Left cardiac atrium (tissue), 4 donors: ENCODE measurements at regions of chr17 and their contacts with region 1.

Region 1: DNA sequence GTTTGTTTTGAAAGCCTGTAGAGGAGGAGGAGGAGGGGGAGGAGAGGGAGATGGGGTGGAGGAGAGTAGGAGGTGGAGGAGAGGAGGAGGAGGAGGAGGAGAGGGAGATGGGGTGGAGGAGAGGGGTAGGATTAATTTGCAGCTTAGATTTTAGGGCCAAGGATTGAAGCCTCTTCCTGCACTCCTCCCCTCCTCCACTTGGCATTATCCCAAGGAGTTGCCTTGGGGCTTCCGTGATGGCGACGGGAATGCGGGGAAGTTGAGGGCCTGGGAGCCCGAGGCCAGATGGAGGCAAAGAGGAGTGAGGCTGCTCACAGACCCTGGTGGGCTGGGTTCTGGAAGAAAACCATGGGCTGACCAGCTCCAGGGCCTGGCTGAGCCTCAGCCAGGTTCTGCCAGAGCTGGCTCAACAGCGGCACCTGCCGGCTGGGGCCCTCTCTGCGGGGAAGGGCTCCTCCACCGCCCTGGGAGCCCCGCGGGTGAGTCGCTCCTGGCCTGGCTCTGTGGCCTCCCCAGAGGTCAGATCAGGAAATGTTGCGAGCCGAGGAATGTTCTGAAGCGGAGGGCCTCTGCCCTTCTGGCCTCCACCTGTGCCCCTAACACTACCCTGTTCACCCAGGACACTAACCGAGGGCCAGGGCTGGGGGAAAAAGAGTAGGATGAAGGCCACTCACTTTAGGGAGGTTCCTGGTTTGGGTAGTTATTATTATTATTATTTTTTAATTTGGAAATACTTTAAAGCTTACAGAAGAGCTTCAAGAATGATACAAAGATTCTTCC is 23.9 kb upstream of the FMNL1 start:
- DNase-seq: peak; percentile 94
- ATAC-seq: peak; percentile 97 to 99

Region 2: DNA sequence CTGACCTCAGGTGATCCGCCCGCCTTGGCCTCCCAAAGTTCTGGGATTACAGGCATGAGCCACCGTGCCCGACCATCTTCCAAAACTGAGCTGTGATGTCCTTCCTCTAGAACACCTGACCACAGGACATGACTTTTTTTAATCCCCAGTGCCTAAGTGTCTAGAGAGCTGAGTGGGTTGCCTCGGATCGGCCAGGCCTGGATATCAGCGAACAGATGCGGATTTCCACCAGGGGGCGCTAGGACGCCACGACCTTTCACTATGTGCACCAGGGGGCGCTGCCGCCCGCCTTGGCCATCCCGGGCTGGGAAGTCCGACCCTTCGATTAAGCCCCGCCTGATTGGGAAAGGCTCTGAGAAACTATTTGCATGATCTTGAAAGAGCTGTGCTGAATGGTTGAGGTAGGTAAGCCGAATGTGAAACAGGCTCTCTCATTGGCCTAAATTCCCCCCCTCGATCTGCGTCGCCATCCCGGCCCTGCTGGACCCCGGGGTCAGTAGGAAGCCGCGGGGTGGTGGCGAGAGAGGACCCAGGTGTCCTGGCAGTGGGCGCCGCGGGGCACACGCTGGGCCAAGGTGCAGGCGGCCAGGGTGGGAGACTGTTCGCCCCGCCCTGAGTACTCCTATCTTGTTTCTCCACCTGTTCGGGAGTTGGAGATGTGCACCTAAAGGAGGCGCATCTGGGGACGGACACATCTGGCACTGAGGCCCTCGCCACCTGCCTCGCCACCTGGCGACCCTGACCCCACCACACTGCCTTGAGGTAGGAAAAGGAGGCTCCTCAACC is 62.4 kb before region 1 on chr17 and contains the start of gene ACBD4:
- intact Hi-C with region 1: loop called (anchors 1 to 2 kb)
- DNase-seq: peak; percentile 97
- ATAC-seq: peak; percentile 79 to 80
- total RNA-seq, gene ACBD4: 8.4 to 8.7 TPM

Region 3: GRCh38 chr17:45148183-45149036 is 49.3 kb before region 1 on chr17 and contains the start of gene HEXIM1:
- intact Hi-C with region 1: loop called in 1 of 2 experiments (anchors 5 kb)
- DNase-seq: peak; percentile 99
- ATAC-seq: peak; percentile 75 to 81
- total RNA-seq, gene HEXIM1: 27.8 to 31.7 TPM